Activated CD4-positive, alpha-beta memory T cell treated with anti-CD3 and anti-CD28 coated beads for 36 hours (primary cell): ENCODE measurements at regions of chr7 and their contacts with region 1.

Region 1: GRCh38 chr7:157432957-157433576 is 96.3 kb downstream of the DNAJB6 start:
- DNase-seq: peak; percentile 74
- H3K4me3 Mint-ChIP-seq: peak overlapping the region; percentile 48
- H3K27ac Mint-ChIP-seq: no peak overlapping the region
- H3K4me1 Mint-ChIP-seq: peaks cover 14% of the 10 kb centered on the region
- H3K27me3 Mint-ChIP-seq: no peaks in the 10 kb centered on the region

Region 2: GRCh38 chr7:157550300-157551275 is 117.5 kb after region 1 on chr7:
- CTCF ChIA-PET with region 1: no interaction called
- POLR2A ChIA-PET with region 1: no interaction called
- intact Hi-C with region 1: no loop called
- DNase-seq: no peak
- H3K4me3 Mint-ChIP-seq: no peak overlapping the region
- H3K27ac Mint-ChIP-seq: no peak overlapping the region
- H3K4me1 Mint-ChIP-seq: no peaks in the 10 kb centered on the region
- H3K27me3 Mint-ChIP-seq: no peaks in the 10 kb centered on the region

Region 3: GRCh38 chr7:157875230-157876179 is 442.4 kb after region 1 on chr7:
- CTCF ChIA-PET with region 1: interaction called, 3 read pairs
- POLR2A ChIA-PET with region 1: no interaction called
- intact Hi-C with region 1: loop called (anchors 2 kb)
- DNase-seq: peak; percentile 67
- H3K4me3 Mint-ChIP-seq: peak overlapping the region; percentile 69
- H3K27ac Mint-ChIP-seq: peak overlapping the region; percentile 18
- H3K4me1 Mint-ChIP-seq: peaks cover 17% of the 10 kb centered on the region
- H3K27me3 Mint-ChIP-seq: no peaks in the 10 kb centered on the region